ENCODE measurements at regions of chr12 and their contacts with region 1.

Region 1: DNA sequence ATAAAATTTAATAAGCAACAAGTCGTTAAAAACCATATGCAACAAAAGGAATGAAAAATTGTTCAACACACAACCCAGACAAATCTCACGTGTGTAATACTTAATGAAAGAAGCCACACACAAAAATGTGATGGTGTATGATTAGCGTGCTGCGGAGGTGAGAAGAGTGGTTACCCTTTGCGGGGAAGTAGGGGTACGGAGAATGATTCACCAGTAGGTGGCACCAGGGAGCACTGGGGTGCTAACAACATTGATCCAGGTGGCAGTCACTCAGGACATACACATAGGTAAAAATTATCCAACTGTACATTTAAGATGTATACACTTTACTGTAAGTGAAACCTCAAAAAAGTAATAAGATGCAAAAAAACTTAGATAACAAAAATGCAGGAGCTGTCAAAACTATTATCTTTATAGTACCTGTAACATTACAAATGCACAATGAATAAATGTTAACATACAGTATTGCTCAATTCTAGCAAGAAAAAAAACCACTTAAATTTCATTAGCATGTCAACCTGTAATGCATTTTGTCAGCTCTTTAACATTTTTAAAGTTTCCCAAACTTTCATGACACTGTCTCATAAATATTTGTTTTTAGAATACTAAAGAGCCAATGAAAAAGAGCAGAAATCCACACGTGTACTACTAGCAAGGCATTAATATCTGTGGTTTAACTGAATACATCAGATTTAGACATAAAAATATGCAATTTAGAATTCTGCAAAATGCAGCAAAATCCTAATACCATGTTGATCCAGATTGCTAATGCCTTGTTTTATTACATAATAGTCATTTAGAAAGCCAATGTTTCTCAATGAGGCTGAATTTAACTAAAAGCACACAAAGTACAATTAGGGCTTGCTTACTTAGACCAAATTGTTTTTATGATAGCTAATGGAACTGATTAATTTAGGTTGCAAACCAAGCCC is 46.7 kb downstream of the TMCC3 start:
- DNase-seq: peak; percentile 27 to 50
- ATAC-seq: peak; percentile 74 to 90; a peak in 4 of 6 replicates
- H3K4me3 ChIP-seq: no peak overlapping the region
- H3K27ac ChIP-seq: no peak overlapping the region
- H3K4me1 ChIP-seq: no peaks in the 10 kb centered on the region
- CTCF ChIP-seq: peak; percentile 80
- EP300 ChIP-seq: no peak
- POLR2A ChIP-seq: no peak
- RAD21 ChIP-seq: peak; percentile 68 to 75

Region 2: DNA sequence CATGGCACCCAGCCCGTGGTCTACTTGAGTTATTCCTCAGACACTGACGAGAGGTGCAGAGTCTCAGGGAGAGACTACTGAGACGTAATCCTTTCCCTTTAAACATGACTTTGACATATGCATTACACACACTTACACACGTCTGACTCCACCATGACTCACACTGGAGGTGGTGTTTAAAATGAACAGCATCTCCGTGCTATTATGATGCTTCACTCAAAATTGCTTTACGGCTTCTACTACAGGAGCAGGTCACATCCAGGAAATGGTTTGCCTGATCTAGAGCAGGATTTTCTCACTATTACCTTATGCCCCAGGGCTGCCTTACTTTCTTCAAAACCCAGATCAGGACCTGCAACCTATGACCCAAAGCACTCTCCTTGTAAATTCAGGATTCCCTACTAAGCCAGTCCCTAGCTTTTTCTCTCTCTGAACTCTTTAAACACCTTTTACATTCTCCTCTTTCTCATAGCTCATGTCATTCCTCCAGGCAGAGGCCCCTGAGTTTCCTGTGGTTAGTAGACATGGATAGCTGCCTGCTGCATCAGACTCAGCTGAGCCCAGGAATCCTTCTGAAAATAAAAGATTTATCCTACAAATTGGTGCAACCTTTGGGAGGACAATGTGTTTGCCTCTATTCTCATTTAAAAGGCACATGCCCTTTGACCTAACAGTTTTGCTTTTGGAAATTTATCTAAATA is 15.4 kb after region 1 on chr12:
- CTCF ChIA-PET with region 1: interaction called, 11 read pairs
- POLR2A ChIA-PET with region 1: no interaction called
- DNase-seq: peak in 1 of 2 experiments; percentile 27
- ATAC-seq: 0 out of 6 replicates have a peak, but pooled peaks of 1 of the 2 experiments have one; percentile 17
- H3K4me3 ChIP-seq: no peak overlapping the region
- H3K27ac ChIP-seq: peak overlapping the region in 1 of 2 experiments; percentile 32; a peak in 2 of 6 replicates
- H3K4me1 ChIP-seq: peaks cover 33% of the 10 kb centered on the region
- CTCF ChIP-seq: no peak
- EP300 ChIP-seq: no peak
- POLR2A ChIP-seq: no peak
- RAD21 ChIP-seq: no peak